GM12878 (cell line): ENCODE measurements at regions of chr17 and their contacts with region 1.

Region 1: DNA sequence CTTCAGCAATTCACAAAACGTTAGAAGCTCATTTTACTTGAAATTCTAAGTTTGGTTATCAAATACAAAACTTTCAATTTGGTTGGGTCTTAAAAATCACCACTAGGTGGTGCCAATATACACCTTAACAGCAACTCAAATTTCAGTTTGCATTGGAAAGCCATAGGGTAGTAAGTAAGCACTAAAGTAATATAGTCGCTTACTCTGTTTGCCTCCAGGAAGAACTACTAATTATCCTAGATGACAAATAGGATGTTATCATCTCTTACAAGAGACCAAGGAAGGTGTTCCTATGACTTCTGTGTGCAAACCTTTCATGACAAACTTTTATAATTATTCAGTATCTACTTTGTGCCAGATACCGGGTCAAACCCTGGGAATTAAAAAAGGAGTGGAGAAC is 93.3 kb downstream of the MYO1D start:
- DNase-seq: peak; percentile 32
- ATAC-seq: peak; percentile 82
- H3K4me3 ChIP-seq: no peak overlapping the region
- H3K27ac ChIP-seq: no peak overlapping the region
- H3K4me1 ChIP-seq: peaks cover 3% of the 10 kb centered on the region
- H3K27me3 ChIP-seq: no peaks in the 10 kb centered on the region
- CTCF ChIP-seq: peak; percentile 41 to 80 (median 60); a peak in 5 of 6 replicates
- EP300 ChIP-seq: no peak
- POLR2A ChIP-seq: no peak
- RAD21 ChIP-seq: peak; percentile 88

Region 2: GRCh38 chr17:32739722-32740121 is 43.9 kb before region 1 on chr17:
- CTCF ChIA-PET with region 1: no interaction called
- POLR2A ChIA-PET with region 1: no interaction called
- RAD21 ChIA-PET with region 1: no interaction called
- SMC1A ChIA-PET with region 1: no interaction called
- in situ Hi-C with region 1: no loop called
- intact Hi-C with region 1: no loop called
- DNase-seq: no peak
- ATAC-seq: no peak
- H3K4me3 ChIP-seq: no peak overlapping the region
- H3K27ac ChIP-seq: no peak overlapping the region
- H3K4me1 ChIP-seq: no peaks in the 10 kb centered on the region
- H3K27me3 ChIP-seq: no peaks in the 10 kb centered on the region
- CTCF ChIP-seq: no peak
- EP300 ChIP-seq: no peak
- POLR2A ChIP-seq: no peak
- RAD21 ChIP-seq: no peak

Region 3: GRCh38 chr17:32755045-32755805 is 28.4 kb before region 1 on chr17:
- CTCF ChIA-PET with region 1: interaction called, 11 read pairs
- POLR2A ChIA-PET with region 1: no interaction called
- RAD21 ChIA-PET with region 1: no interaction called
- SMC1A ChIA-PET with region 1: interaction called, 5 read pairs
- in situ Hi-C with region 1: no loop called
- intact Hi-C with region 1: no loop called
- DNase-seq: no peak
- ATAC-seq: peak; percentile 73
- H3K4me3 ChIP-seq: no peak overlapping the region
- H3K27ac ChIP-seq: no peak overlapping the region
- H3K4me1 ChIP-seq: no peaks in the 10 kb centered on the region
- H3K27me3 ChIP-seq: no peaks in the 10 kb centered on the region
- CTCF ChIP-seq: peak in 2 of 3 experiments; percentile 19 to 56; a peak in 4 of 6 replicates
- EP300 ChIP-seq: no peak
- POLR2A ChIP-seq: no peak
- RAD21 ChIP-seq: peak; percentile 83

Region 4: DNA sequence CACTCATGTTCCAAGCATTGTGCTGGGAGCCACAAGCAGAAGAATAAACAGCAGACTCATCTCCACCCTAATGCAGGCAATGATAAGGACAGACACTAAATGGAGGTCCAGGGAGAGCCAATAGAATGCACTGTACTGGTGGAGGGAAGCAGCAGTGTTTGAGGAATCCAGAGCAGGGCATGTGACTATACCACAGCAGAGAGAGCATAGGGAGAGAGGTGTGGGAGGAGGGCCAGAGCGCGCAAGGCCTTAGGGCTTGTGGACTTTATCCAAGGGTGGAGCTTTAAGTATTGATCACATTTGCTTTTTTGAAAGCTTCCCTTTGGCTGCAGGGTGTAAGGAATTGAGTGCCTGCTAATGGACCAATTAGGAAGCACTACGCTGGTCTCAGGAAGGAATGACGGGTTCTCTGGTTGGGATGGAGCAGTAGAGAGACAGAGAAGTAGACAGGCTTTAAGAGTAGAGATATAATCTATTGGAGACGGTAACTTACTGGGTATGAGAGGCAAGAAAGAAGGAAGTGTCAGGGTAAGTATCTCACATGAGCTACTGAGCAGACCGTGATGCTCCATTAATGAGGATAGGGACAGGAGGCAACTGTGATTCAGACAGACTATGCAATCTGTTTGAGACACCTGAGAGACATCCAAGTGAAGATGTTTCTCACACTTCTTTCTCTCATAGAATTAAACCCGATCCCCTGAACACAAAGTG is 11.1 kb after region 1 on chr17:
- CTCF ChIA-PET with region 1: interaction called, 19 read pairs
- POLR2A ChIA-PET with region 1: no interaction called
- RAD21 ChIA-PET with region 1: interaction called, 10 read pairs
- SMC1A ChIA-PET with region 1: interaction called, 14 read pairs
- in situ Hi-C with region 1: no loop called
- intact Hi-C with region 1: no loop called
- DNase-seq: no peak
- ATAC-seq: no peak
- H3K4me3 ChIP-seq: no peak overlapping the region
- H3K27ac ChIP-seq: no peak overlapping the region
- H3K4me1 ChIP-seq: peaks cover 6% of the 10 kb centered on the region
- H3K27me3 ChIP-seq: no peaks in the 10 kb centered on the region
- CTCF ChIP-seq: no peak
- EP300 ChIP-seq: no peak
- POLR2A ChIP-seq: no peak
- RAD21 ChIP-seq: no peak

Region 5: DNA sequence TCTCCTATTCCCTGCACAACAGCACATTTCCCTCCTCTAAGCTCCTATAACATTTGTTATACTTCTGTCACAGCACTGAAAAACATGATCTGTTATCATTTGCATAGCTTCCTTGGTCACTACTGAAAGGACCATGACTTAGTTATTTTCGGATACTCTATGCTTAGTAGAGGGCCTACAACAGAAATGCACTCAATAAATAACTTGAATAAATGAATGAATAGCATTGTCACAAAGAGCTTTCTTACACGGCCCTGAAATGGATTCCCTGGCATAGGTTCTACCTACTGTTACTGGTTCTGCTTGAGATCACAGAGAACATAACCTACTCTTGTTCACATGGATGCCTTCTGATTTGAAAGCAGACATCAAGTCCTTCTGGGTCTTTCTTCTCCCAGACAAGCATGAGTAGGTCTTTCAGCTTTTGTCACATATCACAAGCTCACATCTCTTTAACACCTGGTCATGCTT is 51.7 kb after region 1 on chr17:
- CTCF ChIA-PET with region 1: interaction called, 29 read pairs
- POLR2A ChIA-PET with region 1: no interaction called
- RAD21 ChIA-PET with region 1: interaction called, 14 read pairs
- SMC1A ChIA-PET with region 1: interaction called, 17 read pairs
- in situ Hi-C with region 1: no loop called
- intact Hi-C with region 1: no loop called
- DNase-seq: peak; percentile 70
- ATAC-seq: peak; percentile 84
- H3K4me3 ChIP-seq: peak overlapping the region; percentile 60
- H3K27ac ChIP-seq: peak overlapping the region; percentile 95
- H3K4me1 ChIP-seq: peaks cover 41% of the 10 kb centered on the region
- H3K27me3 ChIP-seq: no peaks in the 10 kb centered on the region
- CTCF ChIP-seq: no peak
- EP300 ChIP-seq: 0 out of 4 replicates have a peak, but pooled peaks of 1 of the 2 experiments have one; percentile 10
- POLR2A ChIP-seq: no peak
- RAD21 ChIP-seq: no peak

Region 6: GRCh38 chr17:32870027-32870670 is 86.5 kb after region 1 on chr17:
- CTCF ChIA-PET with region 1: interaction called, 335 read pairs
- POLR2A ChIA-PET with region 1: interaction called, 29 read pairs
- RAD21 ChIA-PET with region 1: interaction called, 183 read pairs
- SMC1A ChIA-PET with region 1: interaction called, 248 read pairs
- in situ Hi-C with region 1: no loop called
- intact Hi-C with region 1: no loop called
- DNase-seq: no peak
- ATAC-seq: no peak
- H3K4me3 ChIP-seq: no peak overlapping the region
- H3K27ac ChIP-seq: no peak overlapping the region
- H3K4me1 ChIP-seq: no peaks in the 10 kb centered on the region
- H3K27me3 ChIP-seq: no peaks in the 10 kb centered on the region
- CTCF ChIP-seq: no peak
- EP300 ChIP-seq: no peak
- POLR2A ChIP-seq: no peak
- RAD21 ChIP-seq: no peak

Region 7: DNA sequence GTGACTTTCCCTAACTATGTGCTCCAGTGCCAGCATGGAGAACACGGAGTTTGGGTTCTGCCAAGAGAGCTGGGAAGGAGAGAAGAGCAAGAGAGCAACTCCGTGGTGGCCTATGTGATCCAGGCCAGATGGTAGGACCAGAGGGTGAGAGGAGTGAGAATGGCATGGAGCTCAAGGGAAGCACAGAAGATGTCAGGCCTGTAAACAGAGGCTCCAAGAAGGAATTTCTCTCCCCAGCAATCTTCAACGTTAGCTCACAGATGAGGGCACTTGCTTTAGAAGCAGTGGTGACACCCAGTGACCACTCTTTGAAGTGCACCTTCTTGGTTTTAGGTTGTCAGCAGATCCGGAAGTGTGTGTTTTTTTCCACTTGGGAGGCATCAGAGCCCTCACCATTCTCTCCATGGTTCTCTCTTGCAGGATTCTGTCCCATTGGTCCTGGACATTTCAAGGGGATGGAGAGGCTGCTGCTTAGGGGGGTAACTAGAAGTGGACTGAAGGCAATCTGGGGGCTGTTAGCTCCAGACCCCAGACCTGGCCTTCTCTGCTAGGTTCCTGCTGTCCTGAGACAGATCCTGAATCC is 126.3 kb after region 1 on chr17:
- CTCF ChIA-PET with region 1: interaction called, 206 read pairs
- POLR2A ChIA-PET with region 1: interaction called, 5 read pairs
- RAD21 ChIA-PET with region 1: interaction called, 45 read pairs
- SMC1A ChIA-PET with region 1: interaction called, 137 read pairs
- in situ Hi-C with region 1: loop called (anchors 10 kb)
- intact Hi-C with region 1: loop called (anchors 1 kb)
- DNase-seq: peak; percentile 46
- ATAC-seq: peak; percentile 97
- H3K4me3 ChIP-seq: no peak overlapping the region
- H3K27ac ChIP-seq: no peak overlapping the region
- H3K4me1 ChIP-seq: no peaks in the 10 kb centered on the region
- H3K27me3 ChIP-seq: no peaks in the 10 kb centered on the region
- CTCF ChIP-seq: peak; percentile 85 to 94 (median 91)
- EP300 ChIP-seq: no peak
- POLR2A ChIP-seq: no peak
- RAD21 ChIP-seq: peak; percentile 87